ENCODE measurements at regions of chr4 and their contacts with region 1.

Region 1: DNA sequence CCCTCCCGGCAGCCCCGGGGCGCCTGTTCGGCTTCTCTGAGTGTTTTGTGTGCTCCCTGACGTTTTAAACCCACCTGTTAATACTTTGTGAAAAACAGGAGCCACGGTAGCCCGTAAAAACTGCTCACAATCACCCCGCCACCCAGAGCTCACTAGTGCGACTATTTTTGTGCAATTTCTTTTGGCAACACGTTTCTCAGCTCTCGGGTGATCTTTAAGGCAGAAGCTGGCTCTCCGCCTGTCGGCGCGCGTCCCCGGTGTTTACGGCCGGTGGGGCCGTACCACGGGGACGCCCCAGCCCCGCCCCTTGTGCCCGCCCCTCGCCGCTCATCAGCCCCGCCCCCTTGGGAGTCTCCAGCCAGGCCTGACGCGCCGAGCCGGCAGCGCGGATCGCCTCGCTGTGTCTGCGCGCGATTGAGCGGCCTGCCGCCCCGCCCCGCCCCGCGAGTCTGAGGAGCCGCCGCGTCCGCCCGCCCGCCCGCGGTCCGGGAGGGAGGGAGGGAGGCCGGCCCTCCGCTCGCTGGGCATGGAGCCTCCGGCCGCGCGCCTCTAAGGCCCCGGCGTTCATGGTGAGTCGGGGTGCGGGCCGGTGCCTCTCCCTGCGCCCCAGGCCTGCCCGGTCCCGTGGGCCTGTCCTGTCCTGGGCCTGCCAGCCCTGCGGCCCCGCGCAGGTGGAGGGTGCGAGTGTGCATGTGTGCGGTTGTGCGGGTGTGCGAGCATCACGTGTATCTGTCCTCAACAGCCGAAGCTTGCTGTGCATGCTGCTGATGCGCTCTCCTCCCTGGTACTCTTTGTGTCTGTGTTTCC is 56.2 kb upstream of the TADA2B start:
- DNase-seq: peak; percentile 94
- H3K4me3 Mint-ChIP-seq: peak overlapping the region; percentile 94
- H3K27ac Mint-ChIP-seq: peak overlapping the region; percentile 93
- H3K4me1 Mint-ChIP-seq: peaks cover 70% of the 10 kb centered on the region
- H3K27me3 Mint-ChIP-seq: no peaks in the 10 kb centered on the region

Region 2: DNA sequence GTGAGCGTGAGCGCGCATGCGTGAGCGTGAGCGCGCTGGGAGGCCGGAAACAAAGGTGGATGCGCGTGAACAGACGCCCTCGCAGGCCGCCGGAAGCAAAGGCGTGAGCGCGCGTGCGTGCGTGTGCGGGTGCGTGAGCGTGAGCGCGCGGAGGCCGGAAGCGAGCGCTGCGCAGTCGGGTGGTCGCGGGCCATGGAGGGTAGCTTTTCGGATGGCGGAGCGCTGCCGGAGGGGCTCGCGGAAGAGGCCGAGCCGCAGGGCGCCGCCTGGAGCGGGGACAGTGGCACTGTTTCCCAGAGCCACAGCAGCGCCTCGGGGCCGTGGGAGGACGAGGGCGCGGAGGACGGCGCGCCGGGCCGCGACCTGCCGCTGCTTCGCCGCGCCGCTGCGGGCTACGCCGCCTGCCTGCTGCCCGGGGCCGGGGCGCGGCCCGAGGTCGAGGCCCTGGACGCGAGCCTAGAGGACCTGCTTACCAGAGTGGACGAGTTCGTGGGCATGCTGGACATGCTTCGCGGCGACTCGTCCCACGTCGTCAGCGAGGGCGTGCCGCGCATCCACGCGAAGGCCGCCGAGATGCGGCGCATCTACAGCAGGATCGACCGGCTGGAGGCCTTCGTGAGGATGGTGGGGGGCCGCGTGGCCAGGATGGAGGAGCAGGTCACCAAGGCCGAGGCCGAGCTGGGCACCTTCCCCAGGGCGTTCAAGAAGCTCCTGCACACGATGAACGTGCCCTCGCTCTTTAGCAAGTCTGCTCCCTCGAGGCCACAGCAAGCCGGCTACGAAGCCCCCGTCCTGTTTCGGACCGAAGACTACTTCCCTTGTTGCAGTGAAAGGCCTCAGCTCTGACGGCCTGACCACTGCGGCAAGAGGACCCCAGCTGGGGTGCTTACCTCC is 270.7 kb before region 1 on chr4 and contains the start of gene BLOC1S4:
- CTCF ChIA-PET with region 1: no interaction called
- intact Hi-C with region 1: loop called (anchors 1 kb)
- DNase-seq: peak; percentile 88
- H3K4me3 Mint-ChIP-seq: peak within 1 kb of the TSS; percentile 96
- H3K27ac Mint-ChIP-seq: peak within 1 kb of the TSS; percentile 95
- H3K4me1 Mint-ChIP-seq: peaks cover 26% of the 10 kb centered on the region
- H3K27me3 Mint-ChIP-seq: no peaks in the 10 kb centered on the region
- total RNA-seq, gene BLOC1S4: 11.0 to 11.8 TPM

Region 3: DNA sequence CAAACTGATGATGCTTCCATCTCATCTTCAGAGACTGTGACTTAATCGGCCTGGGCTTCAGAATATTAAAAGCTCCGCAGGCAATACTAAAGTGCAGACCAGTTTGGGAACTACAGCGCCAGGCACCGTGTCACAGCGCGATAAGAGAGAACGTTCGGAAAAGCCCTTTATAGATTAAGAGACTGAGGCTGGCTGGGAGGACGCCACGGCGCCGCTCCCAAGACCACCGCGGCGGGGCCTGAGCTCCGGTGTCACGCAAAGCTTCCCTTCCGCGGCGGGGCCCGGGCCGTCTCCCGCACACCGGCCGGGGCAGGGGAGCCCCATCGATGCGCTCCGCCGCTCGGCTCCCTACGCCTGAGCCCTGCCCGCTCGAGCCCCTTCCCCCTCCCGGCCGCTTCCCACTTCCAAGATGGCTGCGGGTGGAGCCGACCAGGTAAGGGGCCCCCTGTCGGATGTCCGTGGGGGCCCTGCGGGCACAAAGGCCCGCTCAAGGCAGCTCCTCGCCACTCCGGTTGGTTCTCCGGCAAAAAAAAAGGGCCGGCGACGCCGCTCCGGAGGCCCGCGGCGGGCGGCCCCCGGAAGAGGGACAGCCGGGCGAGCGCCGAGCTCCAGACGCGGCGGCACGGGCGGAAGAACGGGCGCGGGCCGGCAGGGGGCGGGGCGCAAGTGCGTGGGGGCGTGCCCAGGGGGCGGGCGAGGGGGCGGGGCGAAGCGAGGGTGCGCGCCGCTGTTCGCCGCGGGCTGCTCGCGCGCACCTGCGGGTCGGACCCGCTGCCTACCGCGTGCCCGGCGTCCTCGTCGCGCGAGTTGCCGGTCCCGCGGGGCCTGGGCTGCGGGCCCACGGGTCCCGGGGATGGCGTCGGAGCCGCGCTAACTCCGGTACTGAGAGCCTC is 77.7 kb before region 1 on chr4 and contains the start of gene TBC1D14:
- CTCF ChIA-PET with region 1: interaction called, 5 read pairs
- intact Hi-C with region 1: loop called (anchors 1 kb)
- DNase-seq: peak; percentile 88
- H3K4me3 Mint-ChIP-seq: peak within 1 kb of the TSS; percentile 92
- H3K27ac Mint-ChIP-seq: peak within 1 kb of the TSS; percentile 86
- H3K4me1 Mint-ChIP-seq: peaks cover 45% of the 10 kb centered on the region
- H3K27me3 Mint-ChIP-seq: peaks cover 3% of the 10 kb centered on the region
- total RNA-seq, gene TBC1D14: 23.6 to 24.6 TPM

Region 4: GRCh38 chr4:6974138-6974848 is 12.7 kb before region 1 on chr4:
- CTCF ChIA-PET with region 1: interaction called, 10 read pairs
- intact Hi-C with region 1: loop called (anchors 1 kb)
- DNase-seq: peak; percentile 91
- H3K4me3 Mint-ChIP-seq: no peak overlapping the region
- H3K27ac Mint-ChIP-seq: no peak overlapping the region
- H3K4me1 Mint-ChIP-seq: peaks cover 13% of the 10 kb centered on the region
- H3K27me3 Mint-ChIP-seq: no peaks in the 10 kb centered on the region

Region 5: GRCh38 chr4:7042697-7043464 is 55.9 kb after region 1 on chr4 and contains the start of gene TADA2B:
- CTCF ChIA-PET with region 1: interaction called, 6 read pairs
- intact Hi-C with region 1: loop called (anchors 1 kb)
- DNase-seq: peak; percentile 91
- H3K4me3 Mint-ChIP-seq: peak within 1 kb of the TSS; percentile 89
- H3K27ac Mint-ChIP-seq: peak within 1 kb of the TSS; percentile 46
- H3K4me1 Mint-ChIP-seq: peaks cover 43% of the 10 kb centered on the region
- H3K27me3 Mint-ChIP-seq: no peaks in the 10 kb centered on the region
- total RNA-seq, gene TADA2B: 8.2 to 9.9 TPM

Region 6: DNA sequence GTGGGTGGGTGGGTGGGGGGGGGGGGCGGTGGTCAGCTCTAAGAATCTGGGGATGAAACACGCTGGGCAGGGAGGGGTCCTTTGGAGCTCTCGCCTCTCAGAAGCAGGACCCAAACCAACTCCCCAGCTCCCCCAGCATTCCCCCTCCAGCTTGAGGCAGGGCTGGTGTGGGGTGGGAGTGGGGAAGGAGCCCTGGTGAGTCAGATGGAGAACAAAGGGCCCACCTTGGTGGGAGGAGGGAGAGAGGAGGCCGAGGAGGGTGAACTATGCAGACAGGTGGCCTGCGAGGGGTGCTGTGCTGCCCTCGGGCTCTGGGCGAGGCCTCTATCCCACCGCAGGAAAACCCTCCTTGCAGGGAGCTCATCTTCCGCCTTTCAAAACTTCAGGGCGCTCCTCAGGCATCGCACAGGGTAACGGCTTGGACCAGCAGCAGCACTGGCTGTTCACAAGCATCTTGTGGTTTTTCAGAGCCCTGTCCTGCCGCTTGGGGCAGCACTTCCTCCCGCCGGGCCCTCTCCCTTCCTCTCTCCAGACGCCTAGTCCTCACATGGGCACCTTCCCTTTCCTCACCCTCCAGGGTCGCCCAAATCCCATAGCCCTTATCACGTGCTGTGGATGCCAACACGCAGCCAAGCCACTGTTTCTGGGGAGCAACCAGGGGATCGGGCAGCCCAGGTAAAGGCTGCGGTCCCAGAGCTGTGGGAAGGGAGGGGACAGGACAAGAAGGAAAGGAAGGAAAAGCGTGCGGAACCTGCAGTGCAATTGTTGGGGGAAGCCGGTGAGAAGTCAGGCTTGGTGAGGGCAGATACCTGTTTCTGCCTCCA is 114.9 kb after region 1 on chr4:
- CTCF ChIA-PET with region 1: no interaction called
- intact Hi-C with region 1: loop called (anchors 1 kb)
- DNase-seq: peak; percentile 79
- H3K4me3 Mint-ChIP-seq: peak overlapping the region; percentile 90
- H3K27ac Mint-ChIP-seq: no peak overlapping the region
- H3K4me1 Mint-ChIP-seq: peaks cover 8% of the 10 kb centered on the region
- H3K27me3 Mint-ChIP-seq: no peaks in the 10 kb centered on the region